Activated B cell treated with CpG ODN at 0.5 μM for 24 hours (primary cell): ENCODE measurements at regions of chr3 and their contacts with region 1.

Region 1: GRCh38 chr3:108914774-108915641 is 38.7 kb downstream of the GUCA1C start:
- DNase-seq: no peak
- ATAC-seq: peak; percentile 78
- H3K4me3 Mint-ChIP-seq: no peak overlapping the region
- H3K27ac Mint-ChIP-seq: no peak overlapping the region
- H3K4me1 Mint-ChIP-seq: no peaks in the 10 kb centered on the region
- H3K27me3 Mint-ChIP-seq: peaks cover 13% of the 10 kb centered on the region
- CTCF ChIP-seq: peak; percentile 32

Region 2: DNA sequence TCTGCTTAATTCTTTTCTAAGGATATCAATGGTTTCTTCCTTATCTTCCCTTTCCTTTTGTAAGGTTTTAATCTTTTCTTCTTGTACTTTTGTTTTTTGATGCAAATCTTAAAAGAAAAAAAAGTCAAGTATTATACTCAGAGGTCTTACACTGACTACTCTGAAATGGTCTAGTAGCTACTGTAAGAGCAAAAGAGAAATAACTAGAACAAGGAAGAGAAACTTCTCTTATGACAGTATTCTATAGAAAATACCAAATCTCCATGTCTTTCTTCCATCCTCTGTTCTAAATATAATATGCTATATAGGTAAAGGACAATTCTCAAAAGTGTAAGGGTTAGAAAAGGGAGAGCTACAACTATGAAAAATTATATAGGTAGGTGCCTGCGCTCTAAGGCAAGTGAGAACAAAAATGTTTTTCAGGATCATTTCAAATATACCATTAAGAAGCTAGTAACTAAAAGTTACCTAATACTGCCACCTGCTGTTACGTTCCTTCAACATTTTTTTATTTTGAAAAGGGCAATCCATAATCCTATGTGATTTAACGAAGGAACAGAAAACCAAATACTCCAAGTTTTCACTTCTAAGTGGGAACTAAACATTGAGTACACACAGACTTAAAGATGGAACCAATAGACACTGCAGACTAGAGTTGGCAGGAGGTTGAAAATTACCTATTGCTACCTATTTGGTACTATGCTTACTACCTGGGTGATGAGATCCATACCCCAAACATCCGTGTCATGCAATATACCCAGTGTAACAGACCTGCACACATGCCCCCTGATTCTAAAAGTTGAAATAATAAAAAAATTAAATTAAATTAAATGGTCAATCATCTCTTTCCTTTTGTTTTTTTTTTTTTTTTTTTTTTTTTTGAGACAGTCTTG is 362.5 kb before region 1 on chr3:
- CTCF ChIA-PET with region 1: interaction called, 3 read pairs
- POLR2A ChIA-PET with region 1: no interaction called
- intact Hi-C with region 1: loop called (anchors 1 kb)
- DNase-seq: no peak
- ATAC-seq: peak; percentile 34
- H3K4me3 Mint-ChIP-seq: peak overlapping the region; percentile 26
- H3K27ac Mint-ChIP-seq: peak overlapping the region; percentile 77
- H3K4me1 Mint-ChIP-seq: peaks cover 8% of the 10 kb centered on the region
- H3K27me3 Mint-ChIP-seq: no peaks in the 10 kb centered on the region
- CTCF ChIP-seq: no peak

Region 3: GRCh38 chr3:108578064-108578463 is 336.9 kb before region 1 on chr3:
- CTCF ChIA-PET with region 1: no interaction called
- POLR2A ChIA-PET with region 1: no interaction called
- intact Hi-C with region 1: no loop called
- DNase-seq: no peak
- ATAC-seq: no peak
- H3K4me3 Mint-ChIP-seq: no peak overlapping the region
- H3K27ac Mint-ChIP-seq: no peak overlapping the region
- H3K4me1 Mint-ChIP-seq: no peaks in the 10 kb centered on the region
- H3K27me3 Mint-ChIP-seq: no peaks in the 10 kb centered on the region
- CTCF ChIP-seq: no peak

Region 4: GRCh38 chr3:108589146-108589997 is 325.6 kb before region 1 on chr3 and contains the starts of genes CIP2A and DZIP3:
- CTCF ChIA-PET with region 1: no interaction called
- POLR2A ChIA-PET with region 1: no interaction called
- intact Hi-C with region 1: loop called (anchors 1 kb)
- DNase-seq: peak; percentile 85
- ATAC-seq: peak; percentile 92
- H3K4me3 Mint-ChIP-seq: peak within 1 kb of the TSS; percentile 97
- H3K27ac Mint-ChIP-seq: peak within 1 kb of the TSS; percentile 100
- H3K4me1 Mint-ChIP-seq: peaks cover 33% of the 10 kb centered on the region
- H3K27me3 Mint-ChIP-seq: no peaks in the 10 kb centered on the region
- CTCF ChIP-seq: no peak
- total RNA-seq, gene CIP2A: 11.3 and 13.1 TPM in 2 replicates
- total RNA-seq, gene DZIP3: 15.5 and 16.7 TPM in 2 replicates

Region 5: DNA sequence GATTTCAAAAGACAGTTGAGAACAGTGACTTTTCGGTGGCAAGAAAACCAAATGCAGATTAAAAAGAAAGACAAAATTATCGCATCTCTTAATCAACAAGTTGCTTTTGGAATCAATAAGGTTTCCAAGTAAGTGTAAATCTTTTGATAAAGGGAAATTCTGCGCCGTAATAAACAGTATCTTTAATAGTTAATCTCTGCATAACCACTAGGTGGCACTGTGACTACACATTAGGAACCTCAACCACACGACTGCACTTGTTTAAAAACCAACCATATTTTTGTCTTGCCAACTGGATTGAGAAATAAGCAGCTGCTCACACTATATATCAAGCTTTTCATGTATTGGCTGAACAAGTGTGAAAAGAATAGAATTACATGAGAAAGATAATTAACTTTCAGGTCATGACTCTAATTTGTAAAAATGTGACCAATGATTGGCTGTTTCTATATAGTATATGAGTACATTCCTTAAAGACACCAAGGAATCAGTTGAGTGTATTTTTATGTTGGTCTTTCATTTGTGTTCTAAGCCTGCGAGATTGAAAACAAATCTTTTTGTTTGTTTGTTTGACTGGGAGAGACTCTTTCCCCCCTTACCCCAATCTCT is 252.8 kb before region 1 on chr3:
- CTCF ChIA-PET with region 1: interaction called, 61 read pairs
- POLR2A ChIA-PET with region 1: no interaction called
- intact Hi-C with region 1: loop called (anchors 1 kb)
- DNase-seq: no peak
- ATAC-seq: peak; percentile 66
- H3K4me3 Mint-ChIP-seq: no peak overlapping the region
- H3K27ac Mint-ChIP-seq: no peak overlapping the region
- H3K4me1 Mint-ChIP-seq: peaks cover 4% of the 10 kb centered on the region
- H3K27me3 Mint-ChIP-seq: no peaks in the 10 kb centered on the region
- CTCF ChIP-seq: no peak

Region 6: GRCh38 chr3:108669208-108669607 is 245.8 kb before region 1 on chr3:
- CTCF ChIA-PET with region 1: interaction called, 61 read pairs
- POLR2A ChIA-PET with region 1: no interaction called
- intact Hi-C with region 1: no loop called
- DNase-seq: no peak
- ATAC-seq: peak; percentile 79
- H3K4me3 Mint-ChIP-seq: peak overlapping the region; percentile 8
- H3K27ac Mint-ChIP-seq: peak overlapping the region; percentile 70
- H3K4me1 Mint-ChIP-seq: peaks cover 29% of the 10 kb centered on the region
- H3K27me3 Mint-ChIP-seq: no peaks in the 10 kb centered on the region
- CTCF ChIP-seq: no peak

Region 7: GRCh38 chr3:108879916-108880315 is 35.1 kb before region 1 on chr3:
- CTCF ChIA-PET with region 1: no interaction called
- POLR2A ChIA-PET with region 1: no interaction called
- intact Hi-C with region 1: no loop called
- DNase-seq: no peak
- ATAC-seq: no peak
- H3K4me3 Mint-ChIP-seq: no peak overlapping the region
- H3K27ac Mint-ChIP-seq: no peak overlapping the region
- H3K4me1 Mint-ChIP-seq: no peaks in the 10 kb centered on the region
- H3K27me3 Mint-ChIP-seq: peaks cover 4% of the 10 kb centered on the region
- CTCF ChIP-seq: no peak

Region 8: GRCh38 chr3:108897883-108898282 is 17.1 kb before region 1 on chr3:
- CTCF ChIA-PET with region 1: no interaction called
- POLR2A ChIA-PET with region 1: no interaction called
- intact Hi-C with region 1: no loop called
- DNase-seq: no peak
- ATAC-seq: no peak
- H3K4me3 Mint-ChIP-seq: no peak overlapping the region
- H3K27ac Mint-ChIP-seq: no peak overlapping the region
- H3K4me1 Mint-ChIP-seq: peaks cover 4% of the 10 kb centered on the region
- H3K27me3 Mint-ChIP-seq: peaks cover 6% of the 10 kb centered on the region
- CTCF ChIP-seq: no peak

Region 9: GRCh38 chr3:109081746-109082510 is 166.9 kb after region 1 on chr3:
- CTCF ChIA-PET with region 1: interaction called, 3 read pairs
- POLR2A ChIA-PET with region 1: no interaction called
- intact Hi-C with region 1: loop called (anchors 2 kb)
- DNase-seq: peak; percentile 23
- ATAC-seq: peak; percentile 97
- H3K4me3 Mint-ChIP-seq: no peak overlapping the region
- H3K27ac Mint-ChIP-seq: no peak overlapping the region
- H3K4me1 Mint-ChIP-seq: peaks cover 6% of the 10 kb centered on the region
- H3K27me3 Mint-ChIP-seq: peaks cover 9% of the 10 kb centered on the region
- CTCF ChIP-seq: no peak